GM18951 (cell line): ENCODE measurements at regions of chr16 and their contacts with region 1.

Region 1: DNA sequence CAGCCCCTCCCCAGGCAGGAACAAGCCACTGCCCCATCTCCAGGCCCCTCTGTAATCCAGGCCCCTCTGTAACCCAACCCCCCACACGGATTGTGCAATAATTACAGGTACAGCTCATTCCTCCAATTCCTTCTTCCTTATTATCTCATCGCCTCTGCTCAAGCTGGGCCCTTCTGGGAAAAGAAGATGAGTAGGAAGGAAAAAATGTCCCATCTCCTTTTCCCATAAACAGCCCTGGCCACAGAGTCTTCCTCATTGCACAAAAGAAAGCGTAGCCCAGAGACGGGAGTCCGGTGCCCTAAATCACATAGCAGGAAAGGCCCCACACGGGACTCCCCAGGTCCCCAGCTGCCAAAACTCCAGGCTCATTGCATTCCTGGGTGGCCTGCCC is 3.6 kb upstream of the LITAFD start:
- POLR2A ChIP-seq: no peak

Region 2: GRCh38 chr16:8572919-8573724 is 305.4 kb before region 1 on chr16:
- in situ Hi-C with region 1: loop called (anchors 10 kb)
- POLR2A ChIP-seq: no peak